CD8-positive, alpha-beta T cell (primary cell): ENCODE measurements at regions of chr1 and their contacts with region 1.

Region 1: GRCh38 chr1:59971464-59971911 is 44.9 kb upstream of the CYP2J2 start:
- DNase-seq: peak in 7 of 9 experiments; percentile 15 to 64 (median 44)
- ATAC-seq: no peak
- H3K4me3 ChIP-seq: no peak overlapping the region
- H3K4me3 Mint-ChIP-seq: no peak overlapping the region
- H3K27ac ChIP-seq: no peak overlapping the region
- H3K27ac Mint-ChIP-seq: no peak overlapping the region
- H3K4me1 ChIP-seq: peaks cover 4% of the 10 kb centered on the region
- H3K4me1 Mint-ChIP-seq: peaks cover 7% of the 10 kb centered on the region
- H3K27me3 ChIP-seq: no peaks in the 10 kb centered on the region
- H3K27me3 Mint-ChIP-seq: peaks cover 14% of the 10 kb centered on the region
- CTCF ChIP-seq: peak; percentile 71

Region 2: DNA sequence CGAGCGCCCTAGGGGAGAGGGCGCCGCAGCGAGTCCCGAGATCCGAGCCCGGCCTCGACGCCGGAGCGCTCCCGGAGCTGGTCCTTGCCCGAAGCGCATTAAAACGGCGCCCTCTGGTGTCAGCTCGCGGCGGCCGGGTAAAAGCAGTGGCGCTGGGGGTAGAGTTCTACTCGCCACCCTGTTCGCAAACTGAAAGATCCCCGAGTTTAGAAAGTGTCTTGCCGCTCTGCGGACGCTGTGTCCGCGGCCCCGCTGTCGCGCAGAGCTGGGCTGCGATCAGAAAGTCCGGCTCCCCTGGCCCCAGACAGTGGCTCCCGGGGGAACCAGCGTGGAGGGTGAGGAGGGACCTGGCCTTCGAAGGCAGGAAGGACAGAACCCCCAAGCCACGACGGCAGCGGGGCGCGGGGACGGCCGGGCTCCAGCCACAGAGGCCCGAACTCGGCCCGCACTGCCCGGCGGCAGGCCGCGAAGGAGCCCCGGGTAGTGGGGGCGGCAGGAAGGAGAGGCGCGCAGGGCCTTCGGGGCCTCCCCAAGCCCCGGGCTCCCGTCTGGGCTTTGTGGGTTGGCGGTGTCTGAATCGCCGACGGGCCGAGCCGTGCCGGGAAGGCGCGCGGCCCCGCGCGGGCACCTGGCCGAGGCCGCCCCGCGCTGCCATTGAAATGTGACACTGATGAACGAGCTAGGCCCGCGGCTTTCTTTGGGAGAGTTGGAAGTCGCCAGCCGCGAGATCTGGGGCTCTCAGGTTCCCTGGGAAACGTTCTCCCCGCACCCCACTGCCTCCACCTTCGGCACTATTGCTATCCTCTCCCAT is 1071.7 kb after region 1 on chr1:
- CTCF ChIA-PET with region 1: interaction called, 6 read pairs
- POLR2A ChIA-PET with region 1: no interaction called
- intact Hi-C with region 1: loop called (anchors 5 kb)
- DNase-seq: peak; percentile 73 to 89 (median 84)
- ATAC-seq: peak; percentile 98
- H3K4me3 ChIP-seq: peak overlapping the region; percentile 45 to 50
- H3K4me3 Mint-ChIP-seq: peak overlapping the region; percentile 82
- H3K27ac ChIP-seq: no peak overlapping the region
- H3K27ac Mint-ChIP-seq: no peak overlapping the region
- H3K4me1 ChIP-seq: peaks cover 6% of the 10 kb centered on the region
- H3K4me1 Mint-ChIP-seq: peaks cover 6% of the 10 kb centered on the region
- H3K27me3 ChIP-seq: peaks cover 0 to 11% of the 10 kb centered on the region in 2 experiments
- H3K27me3 Mint-ChIP-seq: peaks cover 25% of the 10 kb centered on the region
- CTCF ChIP-seq: peak; percentile 79

Region 3: GRCh38 chr1:61453111-61453961 is 1481.8 kb after region 1 on chr1:
- CTCF ChIA-PET with region 1: interaction called, 5 read pairs
- POLR2A ChIA-PET with region 1: no interaction called
- intact Hi-C with region 1: loop called in 1 of 2 experiments (anchors 2 kb)
- DNase-seq: peak; percentile 42 to 81 (median 69)
- ATAC-seq: peak; percentile 87
- H3K4me3 ChIP-seq: no peak overlapping the region
- H3K4me3 Mint-ChIP-seq: no peak overlapping the region
- H3K27ac ChIP-seq: no peak overlapping the region
- H3K27ac Mint-ChIP-seq: peak overlapping the region; percentile 71
- H3K4me1 ChIP-seq: no peaks in the 10 kb centered on the region
- H3K4me1 Mint-ChIP-seq: peaks cover 10% of the 10 kb centered on the region
- H3K27me3 ChIP-seq: no peaks in the 10 kb centered on the region
- H3K27me3 Mint-ChIP-seq: no peaks in the 10 kb centered on the region
- CTCF ChIP-seq: peak; percentile 57

Region 4: GRCh38 chr1:61588736-61589672 is 1617.5 kb after region 1 on chr1:
- CTCF ChIA-PET with region 1: no interaction called
- POLR2A ChIA-PET with region 1: no interaction called
- intact Hi-C with region 1: loop called (anchors 10 kb)
- DNase-seq: peak; percentile 14 to 62 (median 39)
- ATAC-seq: peak; percentile 69
- H3K4me3 ChIP-seq: no peak overlapping the region
- H3K4me3 Mint-ChIP-seq: no peak overlapping the region
- H3K27ac ChIP-seq: no peak overlapping the region
- H3K27ac Mint-ChIP-seq: no peak overlapping the region
- H3K4me1 ChIP-seq: no peaks in the 10 kb centered on the region
- H3K4me1 Mint-ChIP-seq: no peaks in the 10 kb centered on the region
- H3K27me3 ChIP-seq: no peaks in the 10 kb centered on the region
- H3K27me3 Mint-ChIP-seq: peaks cover 8% of the 10 kb centered on the region
- CTCF ChIP-seq: peak; percentile 62

Region 5: DNA sequence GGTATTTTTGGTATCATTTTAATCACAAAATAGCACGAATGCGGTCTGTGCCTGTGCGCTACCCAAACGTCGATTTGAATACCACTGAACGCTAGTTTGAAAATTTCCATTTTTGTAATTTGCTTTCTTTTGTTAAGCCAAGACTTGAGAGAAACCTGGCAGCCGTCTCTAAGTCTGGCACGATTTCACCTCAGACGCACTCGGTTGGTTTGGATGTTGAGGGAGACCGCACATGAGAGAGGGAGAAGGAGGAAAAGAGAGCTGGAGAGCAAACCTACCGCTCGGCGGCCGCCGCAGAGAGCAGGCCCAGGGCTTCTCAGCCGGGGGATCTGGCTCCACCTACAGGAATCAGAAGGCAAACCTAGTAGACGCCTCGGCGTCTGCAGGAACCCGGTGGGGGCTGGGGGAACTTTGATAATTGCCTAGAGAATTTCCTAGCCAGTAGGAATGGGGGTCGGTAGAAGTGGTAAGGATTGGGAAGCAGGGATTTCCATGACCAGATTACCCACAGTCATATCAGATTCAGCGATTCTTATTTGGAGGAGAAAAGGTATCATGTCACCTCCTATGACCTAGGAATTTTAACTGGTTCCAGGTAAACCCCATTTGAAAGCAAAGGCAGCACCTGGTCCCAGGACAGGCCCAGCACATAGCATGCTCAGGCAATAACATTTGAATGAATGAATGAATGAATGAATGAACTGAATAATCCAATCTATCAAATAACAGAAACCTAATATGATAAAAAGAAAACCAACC is 1670.3 kb after region 1 on chr1:
- CTCF ChIA-PET with region 1: no interaction called
- POLR2A ChIA-PET with region 1: no interaction called
- intact Hi-C with region 1: loop called in 1 of 2 experiments (anchors 10 kb)
- DNase-seq: peak; percentile 16 to 70 (median 57)
- ATAC-seq: peak; percentile 84
- H3K4me3 ChIP-seq: peak overlapping the region in 1 of 2 experiments; percentile 25
- H3K4me3 Mint-ChIP-seq: peak overlapping the region; percentile 69
- H3K27ac ChIP-seq: no peak overlapping the region
- H3K27ac Mint-ChIP-seq: peak overlapping the region; percentile 78
- H3K4me1 ChIP-seq: no peaks in the 10 kb centered on the region
- H3K4me1 Mint-ChIP-seq: peaks cover 11% of the 10 kb centered on the region
- H3K27me3 ChIP-seq: peaks cover 0 to 4% of the 10 kb centered on the region in 2 experiments
- H3K27me3 Mint-ChIP-seq: peaks cover 2% of the 10 kb centered on the region
- CTCF ChIP-seq: peak; percentile 73